GM12878 (cell line): ENCODE measurements at regions of chr13 and their contacts with region 1.

Region 1: DNA sequence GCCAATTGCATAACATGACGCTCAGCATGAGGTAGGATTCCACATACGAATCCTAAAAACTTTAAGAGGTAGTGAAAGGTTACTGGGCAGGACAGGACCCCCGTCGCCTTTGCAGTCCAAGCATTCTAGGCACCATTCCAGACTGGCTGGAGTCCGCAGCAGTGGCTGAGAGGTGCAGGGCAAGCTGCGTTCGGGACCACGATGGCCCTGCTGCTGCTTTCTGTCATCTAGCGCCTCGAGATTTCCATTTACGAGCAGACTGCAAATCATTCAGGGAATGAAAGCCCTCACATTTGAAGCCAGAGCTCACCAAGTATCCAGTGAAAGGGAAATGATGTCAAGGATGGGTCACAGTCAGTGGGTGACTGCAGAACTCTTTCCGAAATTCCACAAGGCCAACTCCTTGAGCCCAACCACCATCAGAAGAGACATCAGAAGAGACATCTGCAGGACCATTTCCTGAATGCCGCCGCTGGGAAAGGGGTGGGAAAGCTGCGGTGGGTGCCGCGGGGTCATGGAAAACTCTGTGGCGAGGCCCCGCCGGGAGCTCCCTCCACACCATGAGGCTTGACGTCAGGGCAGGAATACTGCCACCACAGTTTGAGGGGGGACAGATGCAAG is 88.3 kb downstream of the COL4A1 start:
- DNase-seq: no peak
- ATAC-seq: no peak
- H3K4me3 ChIP-seq: no peak overlapping the region
- H3K27ac ChIP-seq: no peak overlapping the region
- H3K4me1 ChIP-seq: no peaks in the 10 kb centered on the region
- H3K27me3 ChIP-seq: peaks cover 0 to 3% of the 10 kb centered on the region in 2 experiments; a peak in 2 of 4 replicates
- CTCF ChIP-seq: no peak
- EP300 ChIP-seq: no peak
- POLR2A ChIP-seq: no peak
- RAD21 ChIP-seq: no peak

Region 2: GRCh38 chr13:109883181-109884180 is 335.2 kb before region 1 on chr13:
- CTCF ChIA-PET with region 1: no interaction called
- POLR2A ChIA-PET with region 1: no interaction called
- RAD21 ChIA-PET with region 1: no interaction called
- SMC1A ChIA-PET with region 1: no interaction called
- in situ Hi-C with region 1: no loop called
- intact Hi-C with region 1: no loop called
- DNase-seq: no peak
- ATAC-seq: no peak
- H3K4me3 ChIP-seq: no peak overlapping the region
- H3K27ac ChIP-seq: no peak overlapping the region
- H3K4me1 ChIP-seq: no peaks in the 10 kb centered on the region
- H3K27me3 ChIP-seq: no peaks in the 10 kb centered on the region; a peak in 1 of 4 replicates
- CTCF ChIP-seq: no peak
- EP300 ChIP-seq: no peak
- POLR2A ChIP-seq: no peak
- RAD21 ChIP-seq: no peak

Region 3: GRCh38 chr13:110233181-110233950 is 14.7 kb after region 1 on chr13:
- CTCF ChIA-PET with region 1: interaction called, 13 read pairs
- POLR2A ChIA-PET with region 1: no interaction called
- RAD21 ChIA-PET with region 1: interaction called, 5 read pairs
- SMC1A ChIA-PET with region 1: interaction called, 10 read pairs
- in situ Hi-C with region 1: no loop called
- intact Hi-C with region 1: no loop called
- DNase-seq: no peak
- ATAC-seq: no peak
- H3K4me3 ChIP-seq: no peak overlapping the region
- H3K27ac ChIP-seq: no peak overlapping the region
- H3K4me1 ChIP-seq: no peaks in the 10 kb centered on the region
- H3K27me3 ChIP-seq: peaks cover 0 to 5% of the 10 kb centered on the region in 2 experiments; a peak in 1 of 4 replicates
- CTCF ChIP-seq: no peak
- EP300 ChIP-seq: no peak
- POLR2A ChIP-seq: no peak
- RAD21 ChIP-seq: no peak

Region 4: DNA sequence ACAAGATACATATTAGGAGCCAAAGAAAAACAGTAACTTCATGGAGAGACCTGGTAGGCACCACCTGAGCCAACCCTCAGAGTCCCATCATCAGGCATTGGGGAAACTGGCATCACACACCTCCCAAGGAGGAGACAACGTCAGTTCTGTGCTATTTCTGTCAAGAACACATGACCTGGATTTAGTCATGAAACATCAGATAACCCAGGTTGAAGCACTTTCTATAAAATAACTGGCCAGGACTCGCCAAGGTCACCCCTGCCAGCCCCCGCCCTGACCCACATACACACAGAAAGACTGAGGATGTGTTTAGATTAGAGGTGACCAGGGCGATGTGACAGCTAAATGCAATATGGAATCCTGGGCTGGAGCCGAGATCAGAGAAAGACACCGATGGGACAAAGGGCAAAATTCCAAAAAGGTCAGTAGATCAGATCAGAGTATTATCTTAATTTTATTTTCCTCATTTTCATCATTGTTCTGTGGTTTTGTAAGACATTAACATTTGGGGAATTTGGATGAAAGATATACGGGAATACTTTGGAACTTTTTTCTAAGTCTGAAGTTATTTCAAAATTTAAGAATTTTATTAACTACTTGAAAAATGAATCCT is 52.7 kb after region 1 on chr13:
- CTCF ChIA-PET with region 1: no interaction called
- POLR2A ChIA-PET with region 1: no interaction called
- RAD21 ChIA-PET with region 1: no interaction called
- SMC1A ChIA-PET with region 1: no interaction called
- in situ Hi-C with region 1: no loop called
- intact Hi-C with region 1: no loop called
- DNase-seq: no peak
- ATAC-seq: no peak
- H3K4me3 ChIP-seq: no peak overlapping the region
- H3K27ac ChIP-seq: no peak overlapping the region
- H3K4me1 ChIP-seq: no peaks in the 10 kb centered on the region
- H3K27me3 ChIP-seq: peaks cover 3 to 4% of the 10 kb centered on the region in 2 experiments; a peak in 3 of 4 replicates
- CTCF ChIP-seq: no peak
- EP300 ChIP-seq: no peak
- POLR2A ChIP-seq: no peak
- RAD21 ChIP-seq: no peak

Region 5: DNA sequence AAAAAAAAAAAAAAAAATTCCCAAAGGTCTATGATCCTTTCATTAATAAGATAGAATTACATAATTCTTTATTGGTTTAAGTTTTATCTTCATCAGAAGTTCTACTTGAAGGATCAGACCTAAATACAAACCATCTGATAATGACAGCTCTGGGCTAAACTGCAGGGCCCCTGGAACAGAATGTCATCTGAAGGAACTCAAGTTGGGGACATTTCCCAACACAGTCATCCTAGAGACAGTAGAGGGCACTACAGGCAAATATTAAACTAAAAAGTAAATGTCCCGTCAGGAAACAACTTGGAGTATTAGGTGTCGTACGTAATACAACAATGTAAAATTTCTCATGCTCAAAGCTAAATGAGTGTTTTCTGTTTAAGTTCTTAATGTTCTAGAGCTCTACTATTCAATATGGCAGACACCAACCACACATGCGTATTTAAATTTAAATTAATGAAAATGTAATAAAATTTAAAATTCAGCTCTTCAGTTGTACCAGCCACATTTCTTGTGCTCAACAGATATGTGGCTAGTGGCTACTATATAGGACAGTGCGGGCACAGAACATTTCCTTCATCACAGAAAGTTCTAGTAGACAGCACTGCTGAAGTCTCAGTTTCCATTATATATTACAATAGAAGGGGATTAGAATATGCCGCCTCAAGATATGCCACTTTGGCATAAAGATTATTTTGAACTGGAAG is 374.9 kb after region 1 on chr13:
- CTCF ChIA-PET with region 1: interaction called, 6 read pairs
- POLR2A ChIA-PET with region 1: no interaction called
- RAD21 ChIA-PET with region 1: interaction called, 6 read pairs
- SMC1A ChIA-PET with region 1: interaction called, 3 read pairs
- in situ Hi-C with region 1: no loop called
- intact Hi-C with region 1: loop called (anchors 5 kb)
- DNase-seq: no peak
- ATAC-seq: peak; percentile 97
- H3K4me3 ChIP-seq: no peak overlapping the region
- H3K27ac ChIP-seq: no peak overlapping the region
- H3K4me1 ChIP-seq: no peaks in the 10 kb centered on the region
- H3K27me3 ChIP-seq: no peaks in the 10 kb centered on the region
- CTCF ChIP-seq: peak; percentile 60 to 71 (median 66)
- EP300 ChIP-seq: no peak
- POLR2A ChIP-seq: no peak
- RAD21 ChIP-seq: peak; percentile 86